Upper lobe of right lung (tissue), 1 donor: ENCODE measurements at regions of chr16 and their contacts with region 1.

Region 1: DNA sequence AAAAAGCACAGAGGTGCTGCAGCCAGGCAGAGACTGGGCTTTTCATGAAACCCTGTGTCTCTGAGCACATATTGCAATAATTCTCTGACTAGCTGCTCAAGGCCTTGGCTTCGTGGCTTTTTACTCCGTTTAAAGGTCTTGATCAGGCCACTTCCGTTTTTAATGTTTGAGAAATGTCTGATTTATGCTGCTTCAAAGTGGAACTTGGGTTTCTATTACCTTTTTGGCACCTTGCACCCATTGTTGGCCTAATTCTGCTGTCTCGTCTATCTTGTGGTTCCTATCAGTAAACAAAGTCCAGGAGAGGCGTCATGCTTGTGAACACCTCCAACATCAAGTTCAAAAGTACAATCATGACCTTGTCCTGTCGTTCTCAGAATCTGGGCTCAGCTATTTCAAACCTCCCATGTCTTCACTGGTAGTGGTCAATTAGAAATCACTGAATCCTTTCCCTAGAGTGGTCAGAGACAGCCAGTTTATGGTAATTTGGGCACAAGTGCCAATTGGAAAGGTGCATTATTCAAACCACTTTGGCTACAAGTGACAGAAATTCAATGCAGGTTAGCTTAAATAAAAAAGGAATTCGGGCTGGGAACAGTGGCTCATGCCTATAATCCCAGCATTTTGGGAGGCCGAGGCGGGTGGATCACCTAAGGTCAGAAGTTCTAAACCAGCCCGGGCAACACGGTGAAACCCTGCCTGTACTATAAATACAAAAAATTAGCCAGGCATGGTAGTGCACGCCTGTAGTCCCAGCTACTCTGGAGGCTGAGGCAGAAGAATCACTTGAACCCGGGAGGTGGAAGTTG is 33.3 kb upstream of the METTL9 start:
- DNase-seq: no peak
- ATAC-seq: peak; percentile 70
- H3K4me3 ChIP-seq: no peak overlapping the region
- H3K27ac ChIP-seq: no peak overlapping the region
- H3K4me1 ChIP-seq: peaks cover 9% of the 10 kb centered on the region
- H3K27me3 ChIP-seq: peaks cover 5% of the 10 kb centered on the region
- CTCF ChIP-seq: no peak

Region 2: DNA sequence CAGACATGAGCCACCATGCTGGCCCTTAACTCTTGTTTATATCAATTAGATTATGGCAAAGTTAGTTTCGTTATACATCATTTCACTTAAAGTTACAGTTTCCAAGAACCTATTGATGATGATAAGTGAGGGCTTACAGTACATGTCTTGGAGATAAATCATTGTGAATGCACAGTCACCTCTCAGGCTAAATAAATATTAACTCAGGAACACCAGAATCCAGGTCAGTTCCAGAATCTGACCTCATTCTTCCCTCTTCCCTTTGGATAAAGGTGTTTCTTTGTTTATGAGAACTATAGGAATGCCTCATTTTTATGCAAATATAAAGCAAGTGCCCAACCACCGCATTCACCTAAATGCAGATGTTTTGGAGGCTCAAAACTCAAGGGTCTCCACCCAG is 239.6 kb before region 1 on chr16:
- intact Hi-C with region 1: no loop called
- DNase-seq: no peak
- ATAC-seq: no peak
- H3K4me3 ChIP-seq: no peak overlapping the region
- H3K27ac ChIP-seq: no peak overlapping the region
- H3K4me1 ChIP-seq: no peaks in the 10 kb centered on the region
- H3K27me3 ChIP-seq: no peaks in the 10 kb centered on the region
- CTCF ChIP-seq: no peak

Region 3: GRCh38 chr16:22694887-22695382 is 1128.9 kb after region 1 on chr16:
- intact Hi-C with region 1: loop called (anchors 5 kb)
- DNase-seq: no peak
- ATAC-seq: peak; percentile 81
- H3K4me3 ChIP-seq: no peak overlapping the region
- H3K27ac ChIP-seq: peak overlapping the region; percentile 68
- H3K4me1 ChIP-seq: peaks cover 11% of the 10 kb centered on the region
- H3K27me3 ChIP-seq: no peaks in the 10 kb centered on the region
- CTCF ChIP-seq: no peak